ACHN (cell line): ENCODE measurements at regions of chr4 and their contacts with region 1.

Region 1: GRCh38 chr4:173257732-173258717 is 76.1 kb downstream of the HMGB2 start:
- DNase-seq: peak; percentile 73

Region 2: GRCh38 chr4:173013232-173013930 is 244.6 kb before region 1 on chr4:
- in situ Hi-C with region 1: loop called (anchors 25 kb)
- DNase-seq: peak; percentile 51